ENCODE measurements at regions of chr5 and their contacts with region 1.

Region 1: DNA sequence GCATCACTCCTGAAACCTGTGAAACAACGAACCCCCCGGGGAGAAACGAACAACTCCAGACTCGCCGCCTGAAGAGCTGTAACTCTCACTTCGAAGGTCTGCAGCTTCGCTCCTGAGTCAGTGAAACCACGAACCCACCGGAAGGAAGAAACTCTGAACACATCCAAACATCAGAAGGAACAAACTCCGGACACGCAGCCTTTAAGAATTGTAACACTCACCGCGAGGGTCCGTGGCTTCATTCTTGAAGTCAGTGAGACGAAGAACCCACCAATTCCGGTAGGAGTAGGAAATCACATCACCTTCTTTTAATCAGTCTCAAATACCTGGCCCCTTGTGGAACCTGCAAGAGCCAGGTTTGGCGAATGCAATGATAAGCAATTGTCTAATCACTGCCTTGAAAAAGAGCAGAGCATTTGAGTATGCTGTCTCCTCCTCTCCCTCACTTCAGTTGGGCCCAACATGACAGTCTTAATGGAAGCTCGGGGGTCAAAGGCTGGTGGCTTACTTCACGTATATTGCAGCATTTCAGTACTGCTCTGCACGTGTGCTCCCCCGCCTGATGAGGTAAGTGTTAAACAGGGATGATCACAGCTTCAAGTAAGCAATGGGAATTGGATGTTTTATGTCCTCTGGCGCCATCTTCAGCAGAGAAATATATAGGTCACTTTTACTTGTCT is 473 bp downstream of the IRGM start:
- DNase-seq: no peak
- ATAC-seq: peak; percentile 96
- H3K4me3 Mint-ChIP-seq: peak overlapping the region; percentile 81
- H3K27ac Mint-ChIP-seq: peak overlapping the region; percentile 55
- H3K4me1 Mint-ChIP-seq: peaks cover 10% of the 10 kb centered on the region
- H3K27me3 Mint-ChIP-seq: no peaks in the 10 kb centered on the region
- CTCF ChIP-seq: no peak

Region 2: DNA sequence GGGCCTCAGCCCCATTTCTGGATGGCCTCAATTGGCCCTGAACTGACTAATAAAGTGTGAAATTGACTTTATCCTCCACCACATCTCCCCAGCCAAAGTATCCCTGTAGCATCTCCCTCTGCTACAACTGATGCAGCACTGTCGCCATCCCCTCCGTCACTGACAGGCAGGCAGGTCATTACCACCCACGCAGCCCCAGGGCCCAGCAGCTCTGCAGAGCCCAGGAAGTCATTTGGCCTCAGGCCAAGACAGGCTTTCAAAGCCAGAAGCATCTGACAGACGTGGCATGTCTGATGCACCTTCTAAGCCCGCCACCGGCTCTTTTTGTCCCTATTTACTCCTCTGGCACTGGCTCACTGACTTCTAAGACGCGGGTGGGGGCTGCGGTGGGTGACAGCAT is 1200.2 kb before region 1 on chr5:
- CTCF ChIA-PET with region 1: no interaction called
- POLR2A ChIA-PET with region 1: no interaction called
- intact Hi-C with region 1: no loop called
- DNase-seq: no peak
- ATAC-seq: no peak
- H3K4me3 Mint-ChIP-seq: no peak overlapping the region
- H3K27ac Mint-ChIP-seq: no peak overlapping the region
- H3K4me1 Mint-ChIP-seq: no peaks in the 10 kb centered on the region
- H3K27me3 Mint-ChIP-seq: no peaks in the 10 kb centered on the region
- CTCF ChIP-seq: no peak

Region 3: GRCh38 chr5:150656191-150657132 is 190.3 kb before region 1 on chr5:
- CTCF ChIA-PET with region 1: no interaction called
- POLR2A ChIA-PET with region 1: interaction called, 5 read pairs
- intact Hi-C with region 1: loop called (anchors 1 kb)
- DNase-seq: peak; percentile 84
- ATAC-seq: peak; percentile 93
- H3K4me3 Mint-ChIP-seq: peak overlapping the region; percentile 81
- H3K27ac Mint-ChIP-seq: no peak overlapping the region
- H3K4me1 Mint-ChIP-seq: peaks cover 16% of the 10 kb centered on the region
- H3K27me3 Mint-ChIP-seq: no peaks in the 10 kb centered on the region
- CTCF ChIP-seq: peak; percentile 23